B cell (primary cell): ENCODE measurements at regions of chr17 and their contacts with region 1.

Region 1: GRCh38 chr17:75845049-75845860 is 1.1 kb upstream of the UNC13D start:
- DNase-seq: peak; percentile 86
- ATAC-seq: peak; percentile 87
- H3K4me3 ChIP-seq: peak overlapping the region in 4 of 5 experiments; percentile 72 to 86 (median 78)
- H3K4me3 Mint-ChIP-seq: peak overlapping the region; percentile 94
- H3K27ac ChIP-seq: peak overlapping the region; percentile 92 to 93
- H3K27ac Mint-ChIP-seq: peak overlapping the region; percentile 97
- H3K4me1 ChIP-seq: peaks cover 17 to 43% of the 10 kb centered on the region in 2 donors
- H3K4me1 Mint-ChIP-seq: peaks cover 26% of the 10 kb centered on the region
- H3K27me3 ChIP-seq: no peaks in the 10 kb centered on the region
- H3K27me3 Mint-ChIP-seq: no peaks in the 10 kb centered on the region
- CTCF ChIP-seq: peak; percentile 83

Region 2: GRCh38 chr17:75784473-75785015 is 60.7 kb before region 1 on chr17 and contains the start of gene UNK:
- CTCF ChIA-PET with region 1: interaction called, 9 read pairs
- POLR2A ChIA-PET with region 1: interaction called, 38 read pairs
- intact Hi-C with region 1: loop called (anchors 2 kb)
- DNase-seq: peak; percentile 99
- ATAC-seq: peak; percentile 75
- H3K4me3 ChIP-seq: peak within 1 kb of the TSS; percentile 75 to 83 (median 81)
- H3K4me3 Mint-ChIP-seq: peak within 1 kb of the TSS; percentile 96
- H3K27ac ChIP-seq: peak within 1 kb of the TSS; percentile 100
- H3K27ac Mint-ChIP-seq: peak within 1 kb of the TSS; percentile 100
- H3K4me1 ChIP-seq: peaks cover 42 to 49% of the 10 kb centered on the region in 2 donors
- H3K4me1 Mint-ChIP-seq: peaks cover 53% of the 10 kb centered on the region
- H3K27me3 ChIP-seq: no peaks in the 10 kb centered on the region
- H3K27me3 Mint-ChIP-seq: no peaks in the 10 kb centered on the region
- CTCF ChIP-seq: no peak
- total RNA-seq, gene UNK: 70.3 and 82.3 TPM in 2 replicates

Region 3: DNA sequence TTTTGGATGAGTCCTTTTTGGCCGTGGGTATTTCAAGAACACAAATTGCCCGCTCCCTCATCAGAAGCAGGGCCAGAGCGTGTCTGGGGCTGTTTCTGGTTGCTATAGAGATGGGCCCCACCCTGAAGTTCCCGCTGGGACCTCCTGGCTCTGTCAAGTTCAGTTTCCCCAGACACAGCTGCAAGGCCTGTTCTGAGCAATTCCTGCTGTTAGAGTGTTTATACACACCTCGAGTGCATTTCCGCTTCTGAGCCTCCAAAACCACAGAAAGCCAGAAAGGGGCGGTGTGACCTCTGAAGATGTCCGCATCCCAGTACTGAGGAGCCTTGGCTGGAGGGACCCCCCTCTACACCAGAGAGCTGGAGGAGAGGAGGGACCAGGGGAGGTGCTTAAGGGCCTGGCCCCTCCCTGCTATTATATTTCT is 19.2 kb after region 1 on chr17:
- CTCF ChIA-PET with region 1: interaction called, 50 read pairs
- POLR2A ChIA-PET with region 1: interaction called, 8 read pairs
- intact Hi-C with region 1: no loop called
- DNase-seq: peak; percentile 88
- ATAC-seq: peak; percentile 88
- H3K4me3 ChIP-seq: no peak overlapping the region
- H3K4me3 Mint-ChIP-seq: peak overlapping the region; percentile 64
- H3K27ac ChIP-seq: peak overlapping the region; percentile 78 to 82
- H3K27ac Mint-ChIP-seq: peak overlapping the region; percentile 93
- H3K4me1 ChIP-seq: peaks cover 15 to 23% of the 10 kb centered on the region in 2 donors
- H3K4me1 Mint-ChIP-seq: peaks cover 23% of the 10 kb centered on the region
- H3K27me3 ChIP-seq: no peaks in the 10 kb centered on the region
- H3K27me3 Mint-ChIP-seq: no peaks in the 10 kb centered on the region
- CTCF ChIP-seq: no peak

Region 4: DNA sequence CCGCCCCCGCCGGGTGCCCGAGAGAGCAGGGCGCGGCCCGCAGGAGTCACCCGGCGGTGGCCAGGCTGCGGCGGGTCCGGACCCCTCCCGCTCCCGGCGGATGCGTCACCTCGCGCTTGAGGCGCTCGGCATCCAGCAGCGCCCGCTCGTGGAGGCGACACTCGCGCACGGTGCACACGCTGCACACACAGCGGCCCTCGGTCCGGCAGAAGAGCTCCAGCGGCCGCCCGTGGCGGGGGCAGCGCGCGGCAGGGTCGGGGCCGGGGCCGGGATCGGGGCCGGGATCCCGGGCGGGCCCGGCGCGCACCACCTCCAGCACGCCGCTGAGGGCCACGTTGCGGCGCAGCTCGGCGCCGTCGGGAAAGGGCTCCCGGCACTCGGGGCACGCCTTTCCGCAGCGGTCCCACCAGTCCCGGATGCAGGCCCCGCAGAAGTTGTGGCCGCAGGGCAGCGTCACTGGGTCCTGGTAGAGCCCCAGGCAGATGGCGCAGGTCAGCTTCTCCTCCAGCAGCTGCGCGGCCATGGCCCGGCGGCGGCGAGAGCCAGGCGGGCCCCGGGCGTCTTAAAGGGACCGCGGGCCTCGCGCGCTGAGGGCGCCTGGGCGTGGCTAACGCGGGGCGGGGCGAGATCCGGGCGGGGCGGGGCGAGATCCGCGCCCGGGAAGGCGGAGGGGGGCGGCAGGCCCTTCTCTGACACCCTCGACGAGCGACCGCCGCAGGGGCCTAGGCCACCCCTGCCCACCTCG is 51.3 kb after region 1 on chr17 and contains the start of gene TRIM65:
- CTCF ChIA-PET with region 1: interaction called, 27 read pairs
- POLR2A ChIA-PET with region 1: interaction called, 8 read pairs
- intact Hi-C with region 1: loop called (anchors 2 kb)
- DNase-seq: peak; percentile 86
- ATAC-seq: peak; percentile 86
- H3K4me3 ChIP-seq: peak within 1 kb of the TSS; percentile 14 to 80 (median 76)
- H3K4me3 Mint-ChIP-seq: peak within 1 kb of the TSS; percentile 85
- H3K27ac ChIP-seq: peak within 1 kb of the TSS; percentile 34 to 49
- H3K27ac Mint-ChIP-seq: peak within 1 kb of the TSS; percentile 82
- H3K4me1 ChIP-seq: peaks cover 16 to 19% of the 10 kb centered on the region in 2 donors
- H3K4me1 Mint-ChIP-seq: peaks cover 26% of the 10 kb centered on the region
- H3K27me3 ChIP-seq: no peaks in the 10 kb centered on the region
- H3K27me3 Mint-ChIP-seq: no peaks in the 10 kb centered on the region
- CTCF ChIP-seq: peak; percentile 41
- total RNA-seq, gene TRIM65: 39.2 and 40.7 TPM in 2 replicates

Region 5: GRCh38 chr17:76005263-76006149 is 160.3 kb after region 1 on chr17:
- CTCF ChIA-PET with region 1: interaction called, 3 read pairs
- POLR2A ChIA-PET with region 1: no interaction called
- intact Hi-C with region 1: loop called (anchors 10 kb)
- DNase-seq: peak; percentile 85
- ATAC-seq: peak; percentile 80
- H3K4me3 ChIP-seq: no peak overlapping the region
- H3K4me3 Mint-ChIP-seq: no peak overlapping the region
- H3K27ac ChIP-seq: no peak overlapping the region
- H3K27ac Mint-ChIP-seq: peak overlapping the region; percentile 56
- H3K4me1 ChIP-seq: peaks cover 0 to 3% of the 10 kb centered on the region in 2 donors
- H3K4me1 Mint-ChIP-seq: no peaks in the 10 kb centered on the region
- H3K27me3 ChIP-seq: no peaks in the 10 kb centered on the region
- H3K27me3 Mint-ChIP-seq: no peaks in the 10 kb centered on the region
- CTCF ChIP-seq: peak; percentile 85